SK-N-SH (cell line): ENCODE measurements at regions of chr15 and their contacts with region 1.

Region 1: GRCh38 chr15:51737280-51738017 is at the start of gene LYSMD2:
- DNase-seq: peak; percentile 87
- H3K4me3 ChIP-seq: peak within 1 kb of the TSS; percentile 65 to 74
- H3K27ac ChIP-seq: peak within 1 kb of the TSS in 1 of 2 experiments; percentile 87; a peak in 2 of 4 replicates
- H3K4me1 ChIP-seq: peaks cover 0 to 23% of the 10 kb centered on the region in 2 experiments; a peak in 2 of 4 replicates
- H3K27me3 ChIP-seq: no peaks in the 10 kb centered on the region
- CTCF ChIP-seq: no peak
- EP300 ChIP-seq: no peak
- RAD21 ChIP-seq: no peak
- polyA plus RNA-seq, gene LYSMD2: 10.3 and 14.2 TPM in 2 replicates

Region 2: GRCh38 chr15:51759557-51760070 is 22.2 kb after region 1 on chr15:
- CTCF ChIA-PET with region 1: interaction called, 17 read pairs
- POLR2A ChIA-PET with region 1: interaction called, 4 read pairs
- DNase-seq: no peak
- H3K4me3 ChIP-seq: no peak overlapping the region
- H3K27ac ChIP-seq: peak overlapping the region; percentile 80 to 82
- H3K4me1 ChIP-seq: peaks cover 11 to 18% of the 10 kb centered on the region in 2 experiments
- H3K27me3 ChIP-seq: no peaks in the 10 kb centered on the region
- CTCF ChIP-seq: peak; percentile 66
- EP300 ChIP-seq: peak; percentile 6 to 79; a peak in 2 of 4 replicates
- RAD21 ChIP-seq: peak; percentile 33; the same call in 1 of the 2 replicates